ENCODE measurements at regions of chr4 and their contacts with region 1.

Region 1: GRCh38 chr4:86934771-86935565 is at the start of gene AFF1:
- ATAC-seq: peak; percentile 70 to 91 (median 88)
- H3K4me3 ChIP-seq: peak within 1 kb of the TSS; percentile 47 to 78 (median 64)
- H3K27ac ChIP-seq: peak within 1 kb of the TSS; percentile 18 to 35
- H3K4me1 ChIP-seq: no peaks in the 10 kb centered on the region
- total RNA-seq, gene AFF1: 7.7 to 47.0 (median 15.8) TPM

Region 2: DNA sequence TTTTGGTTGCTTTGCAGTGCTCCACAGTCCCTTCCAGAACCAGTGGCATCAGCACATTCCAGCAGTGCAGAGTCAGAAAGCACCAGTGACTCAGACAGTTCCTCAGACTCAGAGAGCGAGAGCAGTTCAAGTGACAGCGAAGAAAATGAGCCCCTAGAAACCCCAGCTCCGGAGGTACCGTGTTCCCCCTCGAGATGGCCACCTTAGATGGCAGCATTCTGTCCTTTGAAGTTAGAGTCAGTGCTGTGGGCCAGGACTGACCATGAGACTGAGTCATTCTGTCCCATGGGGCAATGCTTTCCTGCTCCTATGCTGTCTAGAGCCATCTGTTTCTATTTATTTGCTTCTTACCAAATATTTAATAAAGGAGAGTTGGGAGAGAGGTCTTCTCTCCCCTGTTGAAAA is 173.2 kb after region 1 on chr4:
- in situ Hi-C with region 1: loop called in 1 of 9 experiments (anchors 25 kb)
- ATAC-seq: peak; percentile 50 to 95 (median 80)
- H3K4me3 ChIP-seq: no peak overlapping the region
- H3K27ac ChIP-seq: no peak overlapping the region
- H3K4me1 ChIP-seq: no peaks in the 10 kb centered on the region

Region 3: DNA sequence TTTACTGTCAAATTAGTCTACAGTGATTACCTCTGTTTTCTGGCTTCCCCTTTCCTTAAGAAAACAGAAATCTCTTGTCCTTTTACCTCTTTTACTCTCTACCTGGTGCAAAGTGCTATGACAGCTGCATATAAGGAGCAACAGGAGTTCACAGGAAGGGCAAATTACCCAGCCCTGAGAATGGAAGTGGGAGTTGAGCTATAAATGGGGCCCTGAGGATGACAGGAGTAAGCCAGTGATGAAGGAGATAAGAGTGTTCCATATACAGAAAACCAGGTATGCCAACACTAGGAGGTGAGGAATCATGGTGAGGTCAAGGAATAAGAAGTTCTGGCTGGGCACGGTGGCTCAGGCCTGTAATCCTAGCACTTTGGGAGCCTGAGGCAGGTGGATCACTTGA is 392.2 kb after region 1 on chr4:
- in situ Hi-C with region 1: no loop called
- ATAC-seq: no peak
- H3K4me3 ChIP-seq: no peak overlapping the region
- H3K27ac ChIP-seq: no peak overlapping the region
- H3K4me1 ChIP-seq: no peaks in the 10 kb centered on the region

Region 4: DNA sequence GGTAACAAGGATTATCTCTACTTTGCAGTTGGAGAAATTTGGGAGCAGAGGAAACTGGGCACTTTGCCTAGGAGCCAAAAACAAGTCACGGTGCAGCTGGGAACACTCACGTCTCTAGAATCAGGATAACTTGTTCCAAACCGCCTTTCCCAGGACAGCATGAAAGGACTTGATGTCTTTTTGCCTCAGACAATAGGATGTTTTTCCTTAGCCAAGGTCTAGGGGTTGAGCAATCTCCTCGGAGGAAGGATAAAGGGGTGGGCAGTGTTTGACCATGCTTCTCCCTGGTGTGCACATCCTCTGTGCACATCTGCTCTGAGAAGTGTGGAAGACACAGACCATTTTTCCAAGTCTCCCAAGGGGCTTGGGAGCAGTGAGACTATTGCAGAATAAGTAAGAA is 595.9 kb after region 1 on chr4:
- in situ Hi-C with region 1: no loop called
- ATAC-seq: peak in 2 of 8 experiments; percentile 10 to 37
- H3K4me3 ChIP-seq: no peak overlapping the region
- H3K27ac ChIP-seq: no peak overlapping the region
- H3K4me1 ChIP-seq: peaks cover 15 to 19% of the 10 kb centered on the region in 2 donors